Aorta (tissue), 5 donors: ENCODE measurements at regions of chr12 and their contacts with region 1.

Region 1: GRCh38 chr12:104358347-104359003 is 54.9 kb downstream of the EID3 start:
- DNase-seq: peak in 1 of 2 donors; percentile 81
- ATAC-seq: peak; percentile 88
- H3K4me3 ChIP-seq: no peak overlapping the region
- H3K27ac ChIP-seq: no peak overlapping the region
- H3K4me1 ChIP-seq: peaks cover 0 to 3% of the 10 kb centered on the region in 2 donors
- H3K27me3 ChIP-seq: no peaks in the 10 kb centered on the region

Region 2: GRCh38 chr12:104201238-104202001 is 157.1 kb before region 1 on chr12:
- intact Hi-C with region 1: loop called (anchors 5 kb)
- DNase-seq: no peak
- ATAC-seq: peak; percentile 74
- H3K4me3 ChIP-seq: no peak overlapping the region
- H3K27ac ChIP-seq: no peak overlapping the region
- H3K4me1 ChIP-seq: no peaks in the 10 kb centered on the region
- H3K27me3 ChIP-seq: no peaks in the 10 kb centered on the region

Region 3: GRCh38 chr12:104315326-104316239 is 42.9 kb before region 1 on chr12:
- intact Hi-C with region 1: no loop called
- DNase-seq: no peak
- ATAC-seq: no peak
- H3K4me3 ChIP-seq: no peak overlapping the region
- H3K27ac ChIP-seq: no peak overlapping the region
- H3K4me1 ChIP-seq: peaks cover 0 to 5% of the 10 kb centered on the region in 2 donors
- H3K27me3 ChIP-seq: no peaks in the 10 kb centered on the region